ENCODE measurements at regions of chr5 and their contacts with region 1.

Region 1: DNA sequence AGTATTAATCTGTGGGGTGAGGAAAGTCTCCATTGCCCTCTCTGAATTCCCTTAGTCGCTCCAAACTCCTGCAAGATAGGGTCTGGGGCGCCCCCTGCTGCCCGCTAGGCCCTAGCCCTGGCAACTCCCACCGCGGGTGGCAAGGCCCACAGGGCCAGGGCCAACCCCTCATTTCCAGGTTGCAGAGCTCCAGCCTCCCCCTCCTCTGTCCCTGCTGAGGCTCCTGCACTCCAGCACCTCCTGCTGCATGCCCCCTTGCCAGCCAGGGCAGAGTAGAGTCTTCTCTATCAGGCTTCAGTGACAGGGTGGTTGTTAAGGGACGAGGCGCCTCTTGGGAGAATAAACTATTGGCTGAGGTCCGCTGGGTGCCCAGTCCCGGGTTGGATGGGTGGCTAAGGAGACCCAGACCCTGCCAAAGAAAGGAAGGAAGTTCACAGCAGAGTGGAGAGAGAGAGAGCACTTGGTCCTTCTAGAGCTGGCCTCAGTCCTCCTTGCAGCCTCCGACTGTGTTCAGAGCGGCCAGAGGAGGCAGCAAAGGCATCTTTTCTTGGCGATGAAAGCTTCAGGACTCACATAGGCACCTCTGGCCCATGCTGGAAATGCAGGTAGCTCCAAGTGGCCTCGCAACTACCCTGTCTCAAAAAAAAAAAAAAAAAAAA is 45.6 kb downstream of the SAR1B start:
- DNase-seq: peak; percentile 89
- H3K4me3 ChIP-seq: no peak overlapping the region; a peak in 1 of 4 replicates
- H3K27ac ChIP-seq: peak overlapping the region in 1 of 2 experiments; percentile 24; a peak in 1 of 4 replicates
- H3K4me1 ChIP-seq: peaks cover 0 to 5% of the 10 kb centered on the region in 2 experiments; a peak in 1 of 4 replicates
- H3K27me3 ChIP-seq: no peaks in the 10 kb centered on the region
- CTCF ChIP-seq: peak; percentile 88
- EP300 ChIP-seq: no peak
- RAD21 ChIP-seq: peak; percentile 88

Region 2: GRCh38 chr5:134086943-134087305 is 500.1 kb before region 1 on chr5:
- CTCF ChIA-PET with region 1: no interaction called
- POLR2A ChIA-PET with region 1: no interaction called
- DNase-seq: no peak
- H3K4me3 ChIP-seq: no peak overlapping the region
- H3K27ac ChIP-seq: no peak overlapping the region
- H3K4me1 ChIP-seq: peaks cover 0 to 32% of the 10 kb centered on the region in 2 experiments; a peak in 1 of 4 replicates
- H3K27me3 ChIP-seq: no peaks in the 10 kb centered on the region
- CTCF ChIP-seq: no peak
- EP300 ChIP-seq: no peak
- RAD21 ChIP-seq: no peak

Region 3: GRCh38 chr5:134304311-134304710 is 282.7 kb before region 1 on chr5:
- CTCF ChIA-PET with region 1: interaction called, 31 read pairs
- POLR2A ChIA-PET with region 1: no interaction called
- DNase-seq: no peak
- H3K4me3 ChIP-seq: no peak overlapping the region
- H3K27ac ChIP-seq: no peak overlapping the region
- H3K4me1 ChIP-seq: no peaks in the 10 kb centered on the region
- H3K27me3 ChIP-seq: no peaks in the 10 kb centered on the region
- CTCF ChIP-seq: no peak
- EP300 ChIP-seq: no peak
- RAD21 ChIP-seq: no peak

Region 4: DNA sequence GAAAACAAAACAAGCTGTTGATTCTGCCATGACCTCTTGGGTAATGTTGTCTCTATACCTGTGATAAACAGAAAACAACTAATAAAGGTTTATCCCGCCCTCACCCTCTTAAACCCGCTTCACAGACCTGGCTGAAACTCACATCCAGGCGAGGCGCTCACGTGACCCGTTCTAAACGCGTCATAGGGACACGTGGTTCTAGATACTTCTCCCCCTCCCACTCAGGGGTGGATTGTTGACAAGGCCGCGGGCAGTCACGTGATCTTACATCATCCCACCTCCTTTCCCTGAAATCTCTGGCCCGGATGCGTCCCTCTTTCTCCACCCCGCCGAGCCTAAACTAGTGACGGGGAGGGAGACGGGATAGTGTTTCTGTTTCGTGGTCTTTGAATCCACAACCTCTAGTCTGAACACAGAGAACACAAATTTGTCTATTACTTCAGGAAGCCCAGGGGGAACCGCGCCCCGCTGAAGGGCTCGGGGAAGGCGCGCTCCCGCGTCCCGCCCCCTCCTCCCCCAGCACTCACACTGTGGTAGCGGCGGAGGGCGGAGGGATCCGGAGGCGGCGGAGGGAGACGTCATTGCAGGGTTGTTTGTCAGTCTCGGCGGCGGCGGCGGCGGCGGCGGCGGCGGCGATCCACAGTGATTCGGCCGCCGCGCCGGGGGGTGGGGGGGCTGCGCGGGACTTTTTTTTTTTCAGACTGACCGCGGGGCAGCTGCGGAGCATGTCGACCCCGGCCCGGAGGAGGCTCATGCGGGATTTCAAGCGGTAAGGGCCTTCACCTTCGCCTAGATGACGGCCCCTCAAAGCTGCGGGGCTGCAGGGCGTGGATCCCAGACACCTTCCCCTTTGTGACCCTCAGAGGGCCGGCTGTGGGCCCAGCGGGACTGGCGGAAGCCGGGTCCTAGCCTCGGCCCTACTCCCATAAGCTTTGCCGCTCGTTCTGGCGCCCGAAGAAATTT is 215.8 kb before region 1 on chr5 and contains the start of gene UBE2B:
- CTCF ChIA-PET with region 1: interaction called, 12 read pairs
- POLR2A ChIA-PET with region 1: no interaction called
- DNase-seq: peak; percentile 94
- H3K4me3 ChIP-seq: peak within 1 kb of the TSS; percentile 93 to 95
- H3K27ac ChIP-seq: peak within 1 kb of the TSS; percentile 98
- H3K4me1 ChIP-seq: peaks cover 0 to 13% of the 10 kb centered on the region in 2 experiments; a peak in 3 of 4 replicates
- H3K27me3 ChIP-seq: no peaks in the 10 kb centered on the region
- CTCF ChIP-seq: no peak
- EP300 ChIP-seq: peak in 1 of 2 experiments; percentile 94; a peak in 2 of 4 replicates
- RAD21 ChIP-seq: no peak
- polyA plus RNA-seq, gene UBE2B: 24.3 and 28.0 TPM in 2 replicates

Region 5: DNA sequence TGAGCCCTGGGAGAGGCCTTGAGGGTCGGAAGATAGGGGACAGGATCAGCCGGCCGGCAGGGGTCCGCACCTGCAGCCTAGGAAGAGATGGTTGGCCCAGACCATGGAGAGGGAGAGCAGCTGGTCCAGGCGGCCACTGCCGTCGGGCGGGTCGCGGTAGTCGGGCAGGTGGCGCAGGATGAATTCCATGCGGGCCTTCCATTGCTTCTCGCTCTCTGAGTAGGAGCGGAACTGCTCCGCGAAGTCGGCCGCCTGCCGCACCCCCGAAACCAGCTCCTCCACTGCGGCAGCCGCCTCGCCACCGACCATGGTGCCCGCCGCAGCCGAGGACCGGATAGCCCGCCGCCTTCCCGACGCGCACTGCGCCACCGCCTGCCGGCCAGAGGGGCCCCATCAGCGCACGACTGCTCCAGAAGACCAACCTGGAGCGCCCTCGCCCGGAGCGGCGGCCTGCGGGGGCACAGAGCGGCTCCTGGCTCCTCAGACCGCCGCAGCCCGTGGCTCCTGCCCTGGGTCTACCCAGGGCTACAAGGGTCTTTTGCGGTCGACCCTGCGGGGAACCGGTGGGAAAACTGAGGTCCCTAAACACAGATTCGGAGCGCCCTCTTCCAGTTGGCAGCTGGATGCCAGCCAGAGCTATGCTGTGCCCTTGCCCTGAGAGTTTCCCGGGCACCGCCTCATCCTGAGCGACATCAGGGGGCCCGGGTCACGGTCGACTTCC is 175.3 kb before region 1 on chr5 and contains the start of gene CDKN2AIPNL:
- CTCF ChIA-PET with region 1: interaction called, 61 read pairs
- POLR2A ChIA-PET with region 1: interaction called, 5 read pairs
- DNase-seq: peak; percentile 97
- H3K4me3 ChIP-seq: peak within 1 kb of the TSS; percentile 65 to 99
- H3K27ac ChIP-seq: peak within 1 kb of the TSS; percentile 25 to 63; a peak in 3 of 4 replicates
- H3K4me1 ChIP-seq: peaks cover 0 to 14% of the 10 kb centered on the region in 2 experiments; a peak in 2 of 4 replicates
- H3K27me3 ChIP-seq: no peaks in the 10 kb centered on the region
- CTCF ChIP-seq: peak; percentile 70
- EP300 ChIP-seq: peak in 1 of 2 experiments; percentile 65; a peak in 1 of 4 replicates
- RAD21 ChIP-seq: peak; percentile 66
- polyA plus RNA-seq, gene CDKN2AIPNL: 23.3 and 29.4 TPM in 2 replicates

Region 6: GRCh38 chr5:134568761-134569695 is 18.0 kb before region 1 on chr5:
- CTCF ChIA-PET with region 1: interaction called, 14 read pairs
- POLR2A ChIA-PET with region 1: no interaction called
- DNase-seq: peak; percentile 87
- H3K4me3 ChIP-seq: no peak overlapping the region; a peak in 1 of 4 replicates
- H3K27ac ChIP-seq: peak overlapping the region; percentile 54 to 91
- H3K4me1 ChIP-seq: peaks cover 17 to 31% of the 10 kb centered on the region in 2 experiments; a peak in 3 of 4 replicates
- H3K27me3 ChIP-seq: no peaks in the 10 kb centered on the region
- CTCF ChIP-seq: no peak
- EP300 ChIP-seq: 0 out of 4 replicates have a peak, but pooled peaks of 1 of the 2 experiments have one; percentile 31
- RAD21 ChIP-seq: no peak

Region 7: DNA sequence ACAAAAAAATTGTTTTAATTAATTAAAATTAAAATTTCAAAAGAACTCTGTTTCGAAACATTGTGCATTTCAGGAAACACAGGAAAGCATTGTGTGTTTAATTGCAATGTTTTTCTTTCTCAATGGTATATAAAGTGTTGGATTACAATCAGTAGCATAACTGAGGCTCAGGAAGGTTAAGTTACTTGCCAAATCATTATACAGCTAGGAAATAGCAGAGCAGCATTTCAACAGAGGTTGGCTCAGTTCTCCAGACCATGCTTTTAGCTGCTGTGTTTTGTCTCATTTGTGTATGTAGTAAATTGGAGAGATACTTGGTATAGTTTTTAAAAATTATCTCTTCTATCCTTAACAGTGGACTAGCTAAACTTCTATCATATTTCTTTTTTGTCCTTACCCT is 121.3 kb after region 1 on chr5:
- CTCF ChIA-PET with region 1: no interaction called
- POLR2A ChIA-PET with region 1: no interaction called
- DNase-seq: no peak
- H3K4me3 ChIP-seq: no peak overlapping the region
- H3K27ac ChIP-seq: no peak overlapping the region
- H3K4me1 ChIP-seq: no peaks in the 10 kb centered on the region
- H3K27me3 ChIP-seq: no peaks in the 10 kb centered on the region
- CTCF ChIP-seq: no peak
- EP300 ChIP-seq: no peak
- RAD21 ChIP-seq: no peak

Measured in SK-N-SH (cell line).